ENCODE measurements at regions of chr1 and their contacts with region 1.

Region 1: DNA sequence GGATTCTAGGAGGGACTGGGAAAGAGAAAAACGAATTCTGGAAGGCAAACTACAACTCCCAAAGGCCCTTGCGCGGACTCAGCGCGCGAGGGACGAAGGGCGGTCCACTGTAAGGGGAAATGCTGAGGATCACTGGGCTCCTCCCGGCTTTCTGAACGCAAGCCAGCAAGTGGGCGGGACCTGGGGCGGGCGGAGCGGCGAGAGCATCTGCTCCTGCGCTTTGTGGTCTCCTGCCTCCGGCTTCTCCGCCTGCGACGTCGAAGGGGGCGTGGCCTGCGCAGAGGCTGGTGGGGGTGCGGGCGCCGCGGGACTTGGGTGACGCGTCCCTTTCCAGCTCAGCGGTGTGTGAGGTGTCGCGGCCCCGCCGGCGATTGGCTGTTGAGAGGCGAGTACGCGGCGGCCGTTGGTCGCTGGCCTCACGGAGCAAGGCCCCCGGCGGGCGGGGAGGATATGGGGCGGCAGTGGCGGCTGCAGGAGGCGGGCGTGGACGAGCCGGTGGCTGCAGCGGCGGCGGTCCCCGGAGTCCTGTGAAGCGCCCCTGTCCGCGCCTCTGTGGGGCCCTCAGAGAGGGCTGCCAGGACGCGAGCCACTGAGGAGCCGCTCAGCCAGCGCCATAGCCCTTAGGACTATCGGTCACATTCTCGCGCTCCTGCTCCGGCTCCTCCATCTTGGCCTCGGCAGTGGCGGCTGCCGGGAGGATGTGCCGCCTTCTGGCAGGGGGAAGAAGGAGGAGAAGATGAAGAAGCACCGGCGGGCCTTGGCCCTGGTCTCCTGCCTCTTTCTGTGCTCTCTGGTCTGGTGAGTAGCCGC is at the start of gene SUCO:
- DNase-seq: peak; percentile 98

Region 2: DNA sequence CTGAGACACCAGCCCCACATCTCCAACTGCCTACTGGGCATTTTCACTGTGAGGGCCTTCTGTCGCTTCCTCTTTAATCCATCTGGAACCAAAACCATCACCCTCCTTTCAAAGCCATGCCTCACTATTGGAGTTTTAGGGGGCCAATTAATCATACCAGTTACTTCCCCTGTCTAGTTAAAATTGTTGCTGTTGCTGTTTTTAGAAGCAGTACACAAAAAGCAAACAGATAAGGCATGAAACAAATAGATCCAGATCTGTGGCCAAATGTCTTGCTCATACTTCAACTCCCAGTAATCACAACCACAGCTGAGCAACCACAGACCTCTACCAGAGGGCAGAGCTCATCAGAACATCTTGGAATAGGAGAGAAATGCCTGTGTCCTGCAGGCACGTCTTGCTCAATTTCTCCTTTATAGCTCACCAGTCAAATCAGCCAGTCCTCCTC is 246.3 kb before region 1 on chr1:
- CTCF ChIA-PET with region 1: no interaction called
- POLR2A ChIA-PET with region 1: no interaction called
- DNase-seq: no peak

Region 3: DNA sequence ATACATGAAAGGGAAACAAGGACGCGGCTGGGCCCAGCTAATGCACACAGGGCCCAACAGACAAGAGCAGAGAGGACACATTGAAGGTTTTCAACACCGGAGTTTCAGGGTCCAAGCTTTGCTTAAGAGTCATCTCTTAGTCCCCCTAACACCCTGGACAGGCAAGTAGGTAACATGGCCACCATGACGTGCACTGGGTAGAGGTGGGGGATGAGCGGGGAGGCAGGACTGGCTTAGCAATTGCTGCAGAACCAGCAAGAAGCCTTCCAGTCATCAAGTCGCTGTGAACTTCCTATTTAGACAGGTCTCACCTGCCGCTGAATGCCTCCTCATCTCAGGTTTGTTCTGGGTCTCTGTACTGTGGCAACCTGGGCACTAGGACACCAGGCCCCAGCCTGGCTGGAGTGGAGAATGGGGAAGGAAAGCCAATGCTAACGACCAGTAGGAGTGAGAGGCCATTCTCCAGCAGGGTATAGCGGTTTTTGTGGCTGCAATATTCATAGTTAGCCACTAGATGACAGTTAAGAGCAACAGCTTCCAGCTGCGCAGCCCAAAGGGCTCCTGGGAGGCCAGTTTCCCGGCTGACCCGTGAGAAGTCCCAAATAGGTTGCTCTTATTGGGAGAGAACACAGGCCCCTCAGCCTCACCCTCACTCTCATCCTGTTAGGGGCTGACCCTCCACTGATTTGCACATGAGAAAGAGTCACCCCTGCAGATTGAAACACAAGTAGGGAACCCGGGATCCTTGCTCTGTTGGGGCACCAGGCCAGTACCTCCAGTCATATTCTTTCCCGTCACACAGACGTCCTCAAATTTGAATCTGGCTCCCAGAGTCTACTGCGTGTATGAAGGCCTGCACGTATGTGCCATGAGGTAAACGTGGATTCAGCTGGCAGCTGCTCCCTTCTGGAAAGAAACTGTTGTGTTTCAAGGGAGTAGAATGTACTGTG is 83.0 kb before region 1 on chr1:
- CTCF ChIA-PET with region 1: interaction called, 3 read pairs
- POLR2A ChIA-PET with region 1: interaction called, 11 read pairs
- DNase-seq: peak; percentile 78

Region 4: GRCh38 chr1:172515927-172516326 is 17.0 kb before region 1 on chr1:
- CTCF ChIA-PET with region 1: no interaction called
- POLR2A ChIA-PET with region 1: interaction called, 11 read pairs
- DNase-seq: no peak

Region 5: DNA sequence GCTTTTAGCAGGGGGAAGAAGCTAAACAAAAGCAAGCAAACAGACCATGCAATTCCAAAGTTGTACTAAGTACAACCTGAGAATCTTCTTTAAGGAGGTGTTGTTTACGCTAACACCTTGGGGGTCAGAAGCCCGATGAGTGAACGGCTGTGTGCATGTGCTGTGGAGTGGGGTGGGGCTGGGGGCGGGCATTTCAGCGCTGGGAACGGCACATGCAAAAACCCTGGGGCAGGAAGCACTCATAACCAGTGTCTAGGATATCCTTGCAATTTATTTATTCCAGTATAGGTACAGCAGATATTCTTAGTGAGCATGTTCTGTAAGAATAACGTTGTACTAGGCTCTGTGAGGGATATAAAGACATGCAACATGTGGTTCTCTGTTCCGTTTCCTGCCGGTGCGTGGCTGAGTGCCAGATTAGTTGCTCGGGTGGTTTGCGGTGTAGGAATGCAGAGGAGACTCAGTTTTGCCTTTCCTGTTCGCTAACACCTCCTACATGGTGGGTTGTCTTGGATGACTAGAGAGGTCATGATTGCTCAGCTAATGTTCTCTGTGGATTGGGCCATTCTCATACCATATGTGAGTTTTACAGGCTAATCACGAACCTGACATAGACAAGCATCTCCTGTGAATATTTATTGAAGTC is 129.7 kb after region 1 on chr1:
- CTCF ChIA-PET with region 1: no interaction called
- POLR2A ChIA-PET with region 1: no interaction called
- DNase-seq: peak; percentile 32